Caco-2 (cell line): ENCODE measurements at regions of chr6 and their contacts with region 1.

Region 1: DNA sequence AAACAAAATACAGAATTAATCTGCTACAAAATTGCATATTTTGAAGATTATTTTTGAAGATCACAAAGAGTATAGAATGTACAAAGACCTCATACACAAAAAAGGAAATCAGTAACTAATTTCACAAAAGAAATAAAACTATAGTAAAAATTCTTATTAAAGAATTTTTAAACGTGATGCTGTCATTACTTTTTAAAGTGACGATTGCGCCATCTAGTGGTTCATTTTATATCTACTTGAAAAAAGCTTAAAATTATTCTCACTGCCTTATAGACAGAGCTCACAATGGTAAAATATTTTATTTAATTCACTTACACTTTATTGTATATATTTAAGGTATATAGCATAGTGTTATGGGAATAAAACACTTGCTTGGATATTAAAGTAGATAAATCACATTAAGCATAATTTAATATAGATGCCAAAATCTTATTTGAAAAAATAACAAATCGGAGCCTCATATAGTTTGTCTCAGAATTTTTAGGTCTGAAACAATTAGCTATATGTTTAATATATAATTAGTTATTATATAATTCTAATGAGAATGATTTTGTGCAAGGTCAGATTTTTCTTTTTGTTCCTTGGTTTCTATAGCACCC is 128.8 kb downstream of the PHF3 start:
- DNase-seq: peak in 1 of 2 experiments; percentile 36
- H3K4me3 ChIP-seq: no peak overlapping the region
- H3K4me3 Mint-ChIP-seq: no peak overlapping the region
- H3K27ac Mint-ChIP-seq: no peak overlapping the region
- H3K4me1 ChIP-seq: no peaks in the 10 kb centered on the region
- H3K4me1 Mint-ChIP-seq: no peaks in the 10 kb centered on the region
- H3K27me3 ChIP-seq: no peaks in the 10 kb centered on the region
- H3K27me3 Mint-ChIP-seq: no peaks in the 10 kb centered on the region
- CTCF ChIP-seq: peak; percentile 29 to 44

Region 2: DNA sequence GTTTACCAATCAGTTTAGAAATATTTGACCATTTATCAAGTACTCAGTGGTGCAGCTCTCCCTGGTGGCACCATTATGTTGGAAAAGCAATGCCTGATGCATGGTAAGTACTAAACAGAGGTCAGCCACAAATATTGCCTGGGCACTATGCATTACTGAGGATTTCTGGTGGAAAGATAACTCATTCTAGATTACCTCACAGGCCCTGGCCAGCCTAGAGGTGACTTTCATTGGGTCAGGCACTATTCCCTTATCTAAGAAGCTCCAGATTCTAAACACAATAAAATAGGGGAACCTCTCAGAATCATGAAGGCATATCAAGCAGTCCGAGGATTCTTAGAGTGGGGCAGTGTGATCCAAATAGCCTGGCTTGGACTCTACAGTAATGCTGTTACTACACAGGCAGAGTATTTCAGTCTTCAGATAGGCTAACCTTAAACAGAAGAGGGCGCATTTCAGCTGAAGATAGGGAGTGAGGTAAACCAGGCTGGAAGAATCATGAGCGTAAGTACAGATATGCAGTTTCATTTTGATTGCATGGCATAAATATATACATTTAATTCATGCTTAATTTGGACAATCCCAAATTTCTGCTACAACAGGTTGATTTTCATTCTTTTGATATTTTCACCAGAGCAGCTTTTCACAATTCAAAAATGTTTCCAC is 456.7 kb before region 1 on chr6:
- CTCF ChIA-PET with region 1: interaction called, 4 read pairs
- POLR2A ChIA-PET with region 1: no interaction called
- intact Hi-C with region 1: loop called (anchors 1 kb)
- DNase-seq: peak in 1 of 2 experiments; percentile 46
- H3K4me3 ChIP-seq: no peak overlapping the region
- H3K4me3 Mint-ChIP-seq: no peak overlapping the region
- H3K27ac Mint-ChIP-seq: no peak overlapping the region
- H3K4me1 ChIP-seq: peaks cover 23% of the 10 kb centered on the region
- H3K4me1 Mint-ChIP-seq: peaks cover 11% of the 10 kb centered on the region
- H3K27me3 ChIP-seq: no peaks in the 10 kb centered on the region
- H3K27me3 Mint-ChIP-seq: no peaks in the 10 kb centered on the region
- CTCF ChIP-seq: no peak

Region 3: GRCh38 chr6:63509652-63510352 is 254.6 kb before region 1 on chr6:
- CTCF ChIA-PET with region 1: no interaction called
- POLR2A ChIA-PET with region 1: no interaction called
- intact Hi-C with region 1: loop called (anchors 1 kb)
- DNase-seq: peak; percentile 72 to 78
- H3K4me3 ChIP-seq: no peak overlapping the region
- H3K4me3 Mint-ChIP-seq: no peak overlapping the region
- H3K27ac Mint-ChIP-seq: no peak overlapping the region
- H3K4me1 ChIP-seq: peaks cover 33% of the 10 kb centered on the region
- H3K4me1 Mint-ChIP-seq: peaks cover 6% of the 10 kb centered on the region
- H3K27me3 ChIP-seq: no peaks in the 10 kb centered on the region
- H3K27me3 Mint-ChIP-seq: no peaks in the 10 kb centered on the region
- CTCF ChIP-seq: no peak